ENCODE measurements at regions of chr13 and their contacts with region 1.

Region 1: GRCh38 chr13:27744801-27745200 is 47.5 kb upstream of the GSX1 start:
- DNase-seq: no peak
- H3K4me3 ChIP-seq: no peak overlapping the region
- H3K27ac ChIP-seq: no peak overlapping the region
- H3K4me1 ChIP-seq: no peaks in the 10 kb centered on the region
- H3K27me3 ChIP-seq: peaks cover 3% of the 10 kb centered on the region
- CTCF ChIP-seq: no peak

Region 2: GRCh38 chr13:27797228-27797624 is 52.4 kb after region 1 on chr13:
- CTCF ChIA-PET with region 1: no interaction called
- POLR2A ChIA-PET with region 1: interaction called, 21 read pairs
- intact Hi-C with region 1: no loop called
- DNase-seq: peak; percentile 45
- H3K4me3 ChIP-seq: no peak overlapping the region
- H3K27ac ChIP-seq: no peak overlapping the region
- H3K4me1 ChIP-seq: no peaks in the 10 kb centered on the region
- H3K27me3 ChIP-seq: peaks cover 92% of the 10 kb centered on the region
- CTCF ChIP-seq: 0 out of 2 replicates have a peak, but pooled peaks have one; percentile 19

Region 3: GRCh38 chr13:27905650-27906049 is 160.8 kb after region 1 on chr13:
- CTCF ChIA-PET with region 1: no interaction called
- POLR2A ChIA-PET with region 1: no interaction called
- intact Hi-C with region 1: no loop called
- DNase-seq: no peak
- H3K4me3 ChIP-seq: no peak overlapping the region
- H3K27ac ChIP-seq: no peak overlapping the region
- H3K4me1 ChIP-seq: no peaks in the 10 kb centered on the region
- H3K27me3 ChIP-seq: peaks cover 88% of the 10 kb centered on the region
- CTCF ChIP-seq: no peak

Measured in A673 (cell line).